GM12878 (cell line): ENCODE measurements at regions of chr5 and their contacts with region 1.

Region 1: GRCh38 chr5:40134883-40135520 is 544.7 kb upstream of the PTGER4 start:
- DNase-seq: no peak
- ATAC-seq: no peak
- H3K4me3 ChIP-seq: no peak overlapping the region
- H3K27ac ChIP-seq: no peak overlapping the region
- H3K4me1 ChIP-seq: no peaks in the 10 kb centered on the region
- H3K27me3 ChIP-seq: no peaks in the 10 kb centered on the region; a peak in 1 of 4 replicates
- CTCF ChIP-seq: no peak
- EP300 ChIP-seq: no peak
- POLR2A ChIP-seq: no peak
- RAD21 ChIP-seq: no peak

Region 2: GRCh38 chr5:40071870-40072269 is 63.1 kb before region 1 on chr5:
- CTCF ChIA-PET with region 1: no interaction called
- POLR2A ChIA-PET with region 1: no interaction called
- RAD21 ChIA-PET with region 1: no interaction called
- SMC1A ChIA-PET with region 1: no interaction called
- in situ Hi-C with region 1: no loop called
- intact Hi-C with region 1: loop called (anchors 10 kb)
- DNase-seq: no peak
- ATAC-seq: no peak
- H3K4me3 ChIP-seq: no peak overlapping the region
- H3K27ac ChIP-seq: no peak overlapping the region
- H3K4me1 ChIP-seq: no peaks in the 10 kb centered on the region
- H3K27me3 ChIP-seq: no peaks in the 10 kb centered on the region
- CTCF ChIP-seq: no peak
- EP300 ChIP-seq: no peak
- POLR2A ChIP-seq: no peak
- RAD21 ChIP-seq: no peak